T-cell (primary cell): ENCODE measurements at regions of chr19 and their contacts with region 1.

Region 1: DNA sequence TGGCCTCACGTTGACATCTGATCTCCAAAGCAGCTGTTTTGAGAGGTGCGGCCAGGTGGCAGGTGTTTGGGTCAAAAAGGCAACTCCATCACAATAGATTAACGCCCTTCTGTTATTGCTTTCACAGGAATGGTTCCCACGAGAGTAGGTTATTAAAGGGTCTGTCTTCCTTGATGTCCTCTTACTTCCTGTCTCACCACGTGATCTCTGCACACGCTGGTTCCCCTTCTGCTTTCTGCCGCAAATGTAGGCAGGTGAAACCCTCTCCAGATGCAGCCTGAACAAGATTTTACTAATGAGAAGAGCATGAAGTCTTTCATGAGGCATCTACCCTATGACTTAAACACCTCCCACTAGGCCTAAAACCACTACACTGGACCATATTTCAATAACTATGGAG is 22.8 kb upstream of the ZNF564 start:
- DNase-seq: peak in 7 of 35 experiments; percentile 3 to 32 (median 13)
- ATAC-seq: peak in 3 of 4 experiments; percentile 57 to 70 (median 65)
- H3K4me3 ChIP-seq: no peak overlapping the region
- H3K4me3 Mint-ChIP-seq: peak overlapping the region in 1 of 3 donors; percentile 51
- H3K27ac ChIP-seq: no peak overlapping the region
- H3K27ac Mint-ChIP-seq: peak overlapping the region in 1 of 2 donors; percentile 84
- H3K4me1 ChIP-seq: peaks cover 7 to 9% of the 10 kb centered on the region in 2 experiments
- H3K4me1 Mint-ChIP-seq: peaks cover 11 to 16% (median 12%) of the 10 kb centered on the region in 3 donors
- H3K27me3 ChIP-seq: no peaks in the 10 kb centered on the region
- H3K27me3 Mint-ChIP-seq: no peaks in the 10 kb centered on the region

Region 2: GRCh38 chr19:12453491-12453890 is 120.5 kb before region 1 on chr19:
- CTCF ChIA-PET with region 1: no interaction called
- POLR2A ChIA-PET with region 1: no interaction called
- DNase-seq: no peak
- ATAC-seq: no peak
- H3K4me3 ChIP-seq: no peak overlapping the region
- H3K4me3 Mint-ChIP-seq: no peak overlapping the region
- H3K27ac ChIP-seq: no peak overlapping the region
- H3K27ac Mint-ChIP-seq: no peak overlapping the region
- H3K4me1 ChIP-seq: no peaks in the 10 kb centered on the region
- H3K4me1 Mint-ChIP-seq: no peaks in the 10 kb centered on the region
- H3K27me3 ChIP-seq: no peaks in the 10 kb centered on the region
- H3K27me3 Mint-ChIP-seq: no peaks in the 10 kb centered on the region

Region 3: GRCh38 chr19:12484371-12485051 is 89.5 kb before region 1 on chr19 and contains the start of gene ZNF709:
- CTCF ChIA-PET with region 1: no interaction called
- POLR2A ChIA-PET with region 1: interaction called in 1 of 2 experiments, 10 read pairs
- DNase-seq: peak; percentile 68 to 92 (median 82)
- ATAC-seq: peak; percentile 97 to 99 (median 99)
- H3K4me3 ChIP-seq: peak within 1 kb of the TSS; percentile 86 to 94
- H3K4me3 Mint-ChIP-seq: peak within 1 kb of the TSS; percentile 90 to 92 (median 91)
- H3K27ac ChIP-seq: peak within 1 kb of the TSS; percentile 67
- H3K27ac Mint-ChIP-seq: peak within 1 kb of the TSS; percentile 82 to 95
- H3K4me1 ChIP-seq: peaks cover 12 to 31% of the 10 kb centered on the region in 2 experiments
- H3K4me1 Mint-ChIP-seq: peaks cover 30 to 34% (median 31%) of the 10 kb centered on the region in 3 donors
- H3K27me3 ChIP-seq: no peaks in the 10 kb centered on the region
- H3K27me3 Mint-ChIP-seq: no peaks in the 10 kb centered on the region
- total RNA-seq, gene ZNF709: 2.4 to 5.3 (median 5.1) TPM

Region 4: GRCh38 chr19:12703046-12703445 is 129.0 kb after region 1 on chr19:
- CTCF ChIA-PET with region 1: no interaction called
- POLR2A ChIA-PET with region 1: no interaction called
- DNase-seq: peak in 1 of 35 experiments; percentile 29
- ATAC-seq: peak in 1 of 4 experiments; percentile 50
- H3K4me3 ChIP-seq: no peak overlapping the region
- H3K4me3 Mint-ChIP-seq: no peak overlapping the region
- H3K27ac ChIP-seq: no peak overlapping the region
- H3K27ac Mint-ChIP-seq: no peak overlapping the region
- H3K4me1 ChIP-seq: no peaks in the 10 kb centered on the region
- H3K4me1 Mint-ChIP-seq: peaks cover 0 to 2% (median 2%) of the 10 kb centered on the region in 3 donors
- H3K27me3 ChIP-seq: no peaks in the 10 kb centered on the region
- H3K27me3 Mint-ChIP-seq: no peaks in the 10 kb centered on the region